ENCODE measurements at regions of chr2 and their contacts with region 1.

Region 1: GRCh38 chr2:227324995-227325838 is at the start of gene MFF:
- DNase-seq: peak; percentile 90 to 91
- ATAC-seq: peak; percentile 98
- H3K4me3 ChIP-seq: peak within 1 kb of the TSS; percentile 92 to 100 (median 95)
- H3K27ac ChIP-seq: peak within 1 kb of the TSS; percentile 93 to 99 (median 96)
- H3K4me1 ChIP-seq: peaks cover 19 to 25% of the 10 kb centered on the region in 2 donors
- H3K27me3 ChIP-seq: no peaks in the 10 kb centered on the region
- CTCF ChIP-seq: peak; percentile 5 to 38 (median 27)
- POLR2A ChIP-seq: peak; percentile 79 to 87
- total RNA-seq, gene MFF: 94.5 to 151 (median 131) TPM

Region 2: GRCh38 chr2:227132986-227133385 is 192.2 kb before region 1 on chr2:
- in situ Hi-C with region 1: no loop called
- intact Hi-C with region 1: loop called (anchors 5 kb)
- DNase-seq: peak in 1 of 2 donors; percentile 52
- ATAC-seq: peak; percentile 66 to 82
- H3K4me3 ChIP-seq: no peak overlapping the region
- H3K27ac ChIP-seq: peak overlapping the region in 3 of 4 donors; percentile 6 to 57 (median 29)
- H3K4me1 ChIP-seq: peaks cover 17 to 20% of the 10 kb centered on the region in 2 donors
- H3K27me3 ChIP-seq: no peaks in the 10 kb centered on the region
- CTCF ChIP-seq: no peak
- POLR2A ChIP-seq: no peak

Region 3: DNA sequence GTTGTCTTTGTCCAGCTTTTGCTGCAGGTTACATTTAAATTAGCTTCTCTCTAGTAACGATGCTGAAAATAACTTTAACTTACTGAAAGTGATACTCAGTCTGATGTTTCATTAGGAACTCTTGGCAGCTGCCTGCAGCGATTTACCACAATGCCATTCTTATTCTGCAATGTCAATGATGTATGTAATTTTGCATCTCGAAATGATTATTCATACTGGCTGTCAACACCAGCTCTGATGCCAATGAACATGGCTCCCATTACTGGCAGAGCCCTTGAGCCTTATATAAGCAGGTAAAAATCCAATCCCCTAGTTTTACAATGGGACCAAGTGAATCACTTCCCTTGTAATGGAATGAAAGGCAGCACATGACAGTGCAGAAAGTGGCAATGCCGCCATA is 16.4 kb before region 1 on chr2:
- in situ Hi-C with region 1: no loop called
- intact Hi-C with region 1: loop called (anchors 1 kb)
- DNase-seq: peak; percentile 22 to 38
- ATAC-seq: peak; percentile 95 to 96
- H3K4me3 ChIP-seq: peak overlapping the region in 1 of 4 donors; percentile 8
- H3K27ac ChIP-seq: peak overlapping the region; percentile 44 to 69 (median 68)
- H3K4me1 ChIP-seq: peaks cover 0 to 8% of the 10 kb centered on the region in 2 donors
- H3K27me3 ChIP-seq: no peaks in the 10 kb centered on the region
- CTCF ChIP-seq: no peak
- POLR2A ChIP-seq: no peak